Heart right ventricle (tissue), 16 donors: ENCODE measurements at regions of chr2 and their contacts with region 1.

Region 1: DNA sequence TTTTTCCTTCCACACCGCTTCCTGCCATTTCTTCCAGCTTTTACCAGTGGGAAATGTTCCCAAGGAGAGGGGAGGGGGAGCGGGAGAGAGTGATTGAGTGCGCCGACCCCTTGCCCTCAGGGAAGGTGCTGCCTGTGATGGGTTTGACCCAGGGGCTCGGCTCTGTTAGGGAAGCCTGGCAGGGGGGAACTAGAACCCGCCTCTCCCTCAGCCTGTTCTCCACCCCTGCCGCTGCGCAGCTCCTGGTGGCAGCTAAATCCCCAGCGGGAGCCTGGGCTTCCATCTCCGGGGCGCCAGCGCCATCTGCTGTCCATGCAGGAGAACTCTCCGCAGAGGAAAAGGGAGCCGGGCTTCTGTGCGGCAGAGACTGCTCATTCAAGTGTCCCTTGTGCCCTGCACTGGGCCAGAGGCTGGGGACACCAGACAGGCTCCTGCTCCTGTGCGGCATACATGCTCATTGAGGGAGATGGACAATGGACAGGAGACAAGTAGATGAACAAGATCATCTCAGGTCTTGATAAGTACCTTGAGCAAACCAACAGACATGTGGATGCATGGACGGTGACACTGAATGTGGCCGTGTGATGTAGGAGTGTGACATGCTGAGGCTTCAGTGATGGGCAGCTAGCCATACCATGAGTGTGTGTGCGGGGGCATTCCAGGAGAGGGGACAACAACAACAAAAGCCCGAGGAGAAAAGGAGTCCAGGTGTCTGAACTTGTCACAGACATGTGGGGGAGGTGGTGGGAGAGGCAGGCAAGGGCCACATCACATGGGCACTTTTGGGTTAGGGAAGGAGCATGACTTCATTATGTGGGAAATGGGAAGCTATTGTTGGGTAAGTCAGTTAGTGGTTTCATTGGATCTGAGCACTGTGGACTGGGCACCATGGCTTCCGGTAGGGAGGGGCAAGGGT is 13.3 kb downstream of the CHPF start:
- DNase-seq: peak; percentile 83 to 92
- ATAC-seq: peak; percentile 64 to 93 (median 86)
- H3K4me3 ChIP-seq: peak overlapping the region in 3 of 10 donors; percentile 11 to 21 (median 15)
- H3K27ac ChIP-seq: no peak overlapping the region
- H3K4me1 ChIP-seq: peaks cover 5 to 34% (median 18%) of the 10 kb centered on the region in 9 donors
- H3K27me3 ChIP-seq: peaks cover 0 to 60% (median 56%) of the 10 kb centered on the region in 7 donors
- CTCF ChIP-seq: peak; percentile 94 to 98 (median 97)

Region 2: DNA sequence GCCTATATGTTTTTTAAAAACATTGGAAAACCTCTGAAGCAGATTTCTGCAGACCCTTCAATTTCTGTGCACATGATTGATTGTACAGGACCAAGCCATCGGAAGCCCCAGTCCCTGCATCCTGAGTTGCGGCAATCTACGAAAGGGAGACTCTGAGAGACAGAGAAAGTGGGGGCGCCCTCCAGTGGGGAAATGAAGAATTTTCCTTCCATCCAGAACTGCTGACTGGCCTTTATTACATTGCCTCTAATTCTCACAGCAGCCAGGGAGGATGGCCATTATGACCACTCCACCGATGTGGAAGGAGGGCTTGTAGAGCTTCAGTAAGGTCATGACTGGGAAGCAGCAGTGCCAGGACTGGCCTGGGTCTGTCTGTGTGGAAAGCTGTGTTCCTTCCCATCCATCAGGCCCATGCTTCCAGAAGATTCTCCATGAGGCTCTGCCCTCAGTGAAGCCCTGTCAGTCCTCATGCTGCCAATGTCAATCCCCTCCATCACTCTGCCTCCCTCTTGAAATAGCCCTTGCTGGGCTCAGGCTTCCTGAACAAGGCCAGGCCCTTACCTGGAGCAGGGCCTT is 177.8 kb before region 1 on chr2:
- intact Hi-C with region 1: no loop called
- DNase-seq: peak in 1 of 2 donors; percentile 52
- ATAC-seq: peak in 6 of 8 donors; percentile 42 to 84 (median 59)
- H3K4me3 ChIP-seq: no peak overlapping the region
- H3K27ac ChIP-seq: no peak overlapping the region
- H3K4me1 ChIP-seq: peaks cover 0 to 5% (median 0%) of the 10 kb centered on the region in 9 donors
- H3K27me3 ChIP-seq: peaks cover 0 to 76% (median 44%) of the 10 kb centered on the region in 7 donors
- CTCF ChIP-seq: peak; percentile 35 to 77 (median 54)

Region 3: GRCh38 chr2:219459460-219460311 is 70.6 kb before region 1 on chr2:
- intact Hi-C with region 1: loop called in 4 of 10 experiments (anchors 5 kb)
- DNase-seq: peak; percentile 66 to 68
- ATAC-seq: peak; percentile 57 to 81 (median 70)
- H3K4me3 ChIP-seq: no peak overlapping the region
- H3K27ac ChIP-seq: peak overlapping the region; percentile 67 to 96 (median 90)
- H3K4me1 ChIP-seq: peaks cover 3 to 63% (median 11%) of the 10 kb centered on the region in 9 donors
- H3K27me3 ChIP-seq: peaks cover 0 to 5% (median 0%) of the 10 kb centered on the region in 7 donors
- CTCF ChIP-seq: peak; percentile 75 to 92 (median 87)

Region 4: GRCh38 chr2:219475697-219476651 is 54.3 kb before region 1 on chr2:
- intact Hi-C with region 1: loop called in 9 of 10 experiments (anchors 1 to 5 kb)
- DNase-seq: peak; percentile 66 to 77
- ATAC-seq: peak in 7 of 8 donors; percentile 41 to 81 (median 70)
- H3K4me3 ChIP-seq: no peak overlapping the region
- H3K27ac ChIP-seq: peak overlapping the region in 6 of 10 donors; percentile 49 to 78 (median 57)
- H3K4me1 ChIP-seq: peaks cover 0 to 41% (median 6%) of the 10 kb centered on the region in 9 donors
- H3K27me3 ChIP-seq: no peaks in the 10 kb centered on the region
- CTCF ChIP-seq: peak; percentile 64 to 93 (median 84)

Region 5: GRCh38 chr2:219490186-219490585 is 40.1 kb before region 1 on chr2:
- intact Hi-C with region 1: loop called in 2 of 10 experiments (anchors 5 kb)
- DNase-seq: no peak
- ATAC-seq: peak in 1 of 8 donors; percentile 12
- H3K4me3 ChIP-seq: no peak overlapping the region
- H3K27ac ChIP-seq: peak overlapping the region in 3 of 10 donors; percentile 29 to 51 (median 30)
- H3K4me1 ChIP-seq: peaks cover 0 to 43% (median 3%) of the 10 kb centered on the region in 9 donors
- H3K27me3 ChIP-seq: peaks cover 0 to 57% (median 33%) of the 10 kb centered on the region in 7 donors
- CTCF ChIP-seq: peak in 2 of 9 donors; percentile 4 to 13

Region 6: DNA sequence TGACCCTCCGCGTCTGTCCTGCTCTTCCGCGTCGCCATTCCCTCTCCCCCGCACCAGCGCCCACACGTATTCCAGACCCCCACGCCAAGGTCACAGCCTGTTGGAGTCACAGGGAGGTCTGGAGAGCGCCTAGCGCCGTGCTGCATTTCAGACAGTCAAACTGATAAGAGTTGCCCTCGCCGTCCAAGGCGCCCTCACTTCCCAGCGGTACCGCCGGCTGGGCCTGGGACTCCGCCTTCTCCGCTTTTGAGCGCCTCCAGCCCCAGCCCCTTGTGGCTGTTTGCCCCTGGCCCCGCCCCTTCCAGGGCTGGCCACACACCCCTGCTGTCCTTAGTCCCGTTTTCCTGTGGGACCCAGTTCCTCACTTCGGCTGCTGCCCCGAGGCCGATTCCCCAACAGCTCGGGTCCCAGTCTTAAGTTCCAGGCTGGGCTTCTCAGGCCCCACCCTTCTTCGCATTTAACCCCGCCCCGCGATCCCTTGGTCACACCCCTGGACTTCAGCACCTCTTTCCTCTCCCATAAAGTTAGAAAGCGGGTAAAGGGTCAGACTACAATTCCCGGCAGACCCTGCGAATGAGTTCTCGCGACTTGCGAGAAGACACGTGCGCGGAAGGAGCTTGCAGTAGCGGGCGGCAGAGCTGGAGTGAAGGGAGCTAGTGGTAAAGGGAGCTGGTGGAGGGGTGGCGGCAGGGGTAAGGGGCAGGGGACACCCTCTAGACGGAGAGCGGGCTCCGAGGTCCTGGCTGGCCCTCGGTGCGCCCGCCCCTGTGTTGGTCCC is 31.8 kb before region 1 on chr2 and contains the start of gene GMPPA:
- intact Hi-C with region 1: loop called in 2 of 10 experiments (anchors 5 kb)
- DNase-seq: peak; percentile 94 to 97
- ATAC-seq: peak; percentile 87 to 94 (median 90)
- H3K4me3 ChIP-seq: peak within 1 kb of the TSS; percentile 52 to 88 (median 75)
- H3K27ac ChIP-seq: peak within 1 kb of the TSS; percentile 91 to 100 (median 96)
- H3K4me1 ChIP-seq: peaks cover 19 to 50% (median 37%) of the 10 kb centered on the region in 9 donors
- H3K27me3 ChIP-seq: peaks cover 0 to 43% (median 18%) of the 10 kb centered on the region in 7 donors
- CTCF ChIP-seq: peak in 3 of 9 donors; percentile 15 to 29 (median 25)
- total RNA-seq, gene GMPPA: 15.8 to 29.4 (median 21.0) TPM

Region 7: GRCh38 chr2:219578790-219579616 is 48.7 kb after region 1 on chr2:
- intact Hi-C with region 1: no loop called
- DNase-seq: no peak
- ATAC-seq: no peak
- H3K4me3 ChIP-seq: no peak overlapping the region
- H3K27ac ChIP-seq: no peak overlapping the region
- H3K4me1 ChIP-seq: peaks cover 0 to 15% (median 0%) of the 10 kb centered on the region in 9 donors
- H3K27me3 ChIP-seq: peaks cover 0 to 7% (median 3%) of the 10 kb centered on the region in 7 donors
- CTCF ChIP-seq: no peak